ENCODE measurements at regions of chr5 and their contacts with region 1.

Region 1: GRCh38 chr5:126656396-126657007 is 55.8 kb downstream of the PHAX start:
- DNase-seq: peak; percentile 66
- H3K4me3 ChIP-seq: no peak overlapping the region
- H3K27ac ChIP-seq: no peak overlapping the region
- H3K4me1 ChIP-seq: peaks cover 22% of the 10 kb centered on the region
- H3K27me3 ChIP-seq: no peaks in the 10 kb centered on the region
- CTCF ChIP-seq: peak; percentile 92

Region 2: GRCh38 chr5:126801992-126802294 is 145.4 kb after region 1 on chr5:
- CTCF ChIA-PET with region 1: no interaction called
- POLR2A ChIA-PET with region 1: no interaction called
- intact Hi-C with region 1: loop called (anchors 5 kb)
- DNase-seq: peak; percentile 59
- H3K4me3 ChIP-seq: no peak overlapping the region
- H3K27ac ChIP-seq: no peak overlapping the region
- H3K4me1 ChIP-seq: peaks cover 25% of the 10 kb centered on the region
- H3K27me3 ChIP-seq: no peaks in the 10 kb centered on the region
- CTCF ChIP-seq: peak; percentile 54

Region 3: GRCh38 chr5:127040796-127041520 is 384.5 kb after region 1 on chr5:
- CTCF ChIA-PET with region 1: no interaction called
- POLR2A ChIA-PET with region 1: no interaction called
- intact Hi-C with region 1: loop called (anchors 10 kb)
- DNase-seq: no peak
- H3K4me3 ChIP-seq: no peak overlapping the region
- H3K27ac ChIP-seq: no peak overlapping the region
- H3K4me1 ChIP-seq: no peaks in the 10 kb centered on the region
- H3K27me3 ChIP-seq: no peaks in the 10 kb centered on the region
- CTCF ChIP-seq: no peak

Region 4: DNA sequence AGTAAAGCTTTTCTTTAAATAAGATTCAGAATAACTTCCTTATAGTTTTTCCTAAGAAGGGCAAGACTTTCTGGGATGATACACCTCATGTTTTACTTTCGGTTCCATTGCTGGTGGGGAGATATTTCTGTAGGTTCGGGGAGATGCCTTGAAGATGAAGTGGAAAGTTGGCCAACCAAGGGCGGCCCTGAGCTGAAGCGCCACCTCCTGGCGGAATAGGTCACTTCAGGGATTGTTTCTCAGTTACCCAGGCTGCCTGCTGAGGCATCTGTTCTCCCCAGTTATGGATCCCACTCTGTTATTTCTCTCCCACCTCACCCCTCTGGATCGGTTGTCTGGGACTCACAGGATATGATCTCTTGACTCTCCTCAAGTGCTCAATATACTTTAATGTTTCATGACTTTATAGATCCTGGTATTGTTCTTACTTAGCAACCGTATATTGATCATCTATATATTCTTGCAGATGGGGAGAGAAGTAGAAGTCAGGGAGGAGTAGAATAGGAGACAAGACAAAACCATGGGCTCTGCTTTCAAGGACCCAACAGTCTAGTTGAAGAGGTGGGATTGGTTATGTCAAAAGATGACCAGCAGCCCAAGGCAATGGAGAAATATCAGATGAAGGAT is 657.5 kb after region 1 on chr5:
- CTCF ChIA-PET with region 1: no interaction called
- POLR2A ChIA-PET with region 1: no interaction called
- intact Hi-C with region 1: loop called (anchors 1 kb)
- DNase-seq: peak; percentile 69
- H3K4me3 ChIP-seq: no peak overlapping the region
- H3K27ac ChIP-seq: no peak overlapping the region
- H3K4me1 ChIP-seq: peaks cover 16% of the 10 kb centered on the region
- H3K27me3 ChIP-seq: no peaks in the 10 kb centered on the region
- CTCF ChIP-seq: peak; percentile 88

Region 5: GRCh38 chr5:127441799-127442484 is 785.4 kb after region 1 on chr5:
- CTCF ChIA-PET with region 1: no interaction called
- POLR2A ChIA-PET with region 1: no interaction called
- intact Hi-C with region 1: loop called (anchors 5 kb)
- DNase-seq: peak; percentile 44
- H3K4me3 ChIP-seq: no peak overlapping the region
- H3K27ac ChIP-seq: no peak overlapping the region
- H3K4me1 ChIP-seq: no peaks in the 10 kb centered on the region
- H3K27me3 ChIP-seq: no peaks in the 10 kb centered on the region
- CTCF ChIP-seq: peak; percentile 52

Region 6: DNA sequence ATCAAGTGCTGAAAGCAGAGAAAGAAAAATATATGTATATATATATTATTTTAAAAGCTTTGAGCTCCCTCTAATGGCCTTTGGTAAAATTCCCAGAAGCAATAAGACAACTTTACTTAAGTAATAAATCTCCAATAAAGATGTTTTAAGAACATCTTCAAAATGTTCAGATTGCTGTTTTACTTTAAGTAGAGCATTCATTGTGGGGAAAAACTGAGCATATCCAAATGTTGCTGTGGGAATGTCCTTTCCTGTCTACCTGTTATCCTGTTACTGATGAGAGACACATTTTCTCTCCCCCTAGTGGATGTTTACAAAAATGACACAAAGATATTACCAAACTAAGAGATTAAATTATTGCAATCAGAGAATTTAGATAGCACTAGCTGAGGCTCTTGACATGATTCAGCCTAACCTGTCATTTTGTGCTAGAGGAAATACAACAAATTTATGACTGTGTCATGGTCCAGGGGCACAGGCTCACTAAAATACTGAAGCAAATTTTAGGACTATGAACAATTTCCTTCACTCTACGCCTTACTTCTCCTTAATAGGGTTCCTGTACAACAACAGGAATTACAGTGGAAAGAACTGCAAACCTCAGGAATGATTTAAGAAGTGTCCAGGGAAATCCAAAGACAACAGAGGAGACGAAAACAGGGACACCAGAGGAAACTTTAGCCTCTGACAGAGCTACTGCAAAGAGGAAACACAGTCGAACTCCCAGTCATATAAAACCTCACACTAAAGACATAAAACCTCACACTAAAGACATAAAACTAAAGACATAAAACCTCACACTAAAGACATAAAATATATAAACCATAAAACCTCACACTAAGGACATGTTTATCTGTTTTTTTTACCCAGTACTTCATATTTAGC is 836.6 kb after region 1 on chr5:
- CTCF ChIA-PET with region 1: no interaction called
- POLR2A ChIA-PET with region 1: no interaction called
- intact Hi-C with region 1: loop called (anchors 5 kb)
- DNase-seq: peak; percentile 62
- H3K4me3 ChIP-seq: no peak overlapping the region
- H3K27ac ChIP-seq: no peak overlapping the region
- H3K4me1 ChIP-seq: no peaks in the 10 kb centered on the region
- H3K27me3 ChIP-seq: peaks cover 6% of the 10 kb centered on the region
- CTCF ChIP-seq: peak; percentile 94

Region 7: GRCh38 chr5:128201065-128201926 is 1544.8 kb after region 1 on chr5:
- CTCF ChIA-PET with region 1: no interaction called
- POLR2A ChIA-PET with region 1: no interaction called
- intact Hi-C with region 1: loop called (anchors 10 kb)
- DNase-seq: peak; percentile 69
- H3K4me3 ChIP-seq: peak overlapping the region; percentile 28
- H3K27ac ChIP-seq: no peak overlapping the region
- H3K4me1 ChIP-seq: peaks cover 4% of the 10 kb centered on the region
- H3K27me3 ChIP-seq: no peaks in the 10 kb centered on the region
- CTCF ChIP-seq: peak; percentile 75